Heart left ventricle (tissue), 16 donors: ENCODE measurements at regions of chr7 and their contacts with region 1.

Region 1: GRCh38 chr7:105664816-105665525 is 83.7 kb upstream of the EFCAB10 start:
- DNase-seq: no peak
- ATAC-seq: no peak
- H3K4me3 ChIP-seq: no peak overlapping the region
- H3K27ac ChIP-seq: no peak overlapping the region
- H3K4me1 ChIP-seq: no peaks in the 10 kb centered on the region
- H3K27me3 ChIP-seq: no peaks in the 10 kb centered on the region
- CTCF ChIP-seq: no peak
- POLR2A ChIP-seq: no peak

Region 2: DNA sequence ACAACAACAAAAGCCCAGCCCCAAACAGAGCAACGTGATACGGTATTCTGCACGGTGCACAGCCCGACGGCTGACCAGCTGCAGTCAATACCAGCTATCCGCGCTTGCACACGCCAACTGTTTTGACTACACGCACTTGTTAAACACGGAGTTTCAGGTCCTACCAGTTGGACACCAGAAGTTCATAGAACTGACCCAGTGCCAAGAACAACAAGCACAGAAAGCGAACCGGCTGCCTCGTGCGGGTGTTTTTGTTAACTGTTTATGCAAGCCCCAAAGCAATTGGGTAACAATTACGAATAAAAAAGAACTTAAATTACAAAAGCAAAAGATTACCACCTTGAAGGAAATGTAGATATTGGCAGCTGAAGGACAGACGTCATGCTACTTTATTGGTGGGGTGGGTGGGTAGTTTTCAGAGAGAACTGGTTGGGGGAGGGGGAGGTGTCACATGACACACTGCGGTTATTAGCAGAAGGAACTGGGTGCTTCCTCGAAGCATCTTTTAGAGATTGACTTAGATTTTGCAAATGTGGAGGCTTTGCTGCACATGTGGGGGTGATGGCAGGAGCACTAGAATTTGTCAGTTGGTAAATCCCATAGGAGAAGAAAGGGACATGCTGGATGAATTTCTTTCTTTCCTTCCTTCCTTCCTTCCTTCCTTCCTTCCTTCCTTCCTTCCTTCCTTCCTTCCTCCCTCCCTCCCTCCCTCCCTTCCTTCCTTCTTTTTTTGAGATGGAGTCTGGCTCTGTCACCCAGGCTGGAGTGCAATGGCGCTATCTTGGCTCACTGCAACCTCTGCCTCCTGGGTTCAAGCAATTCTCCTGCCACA is 27.0 kb after region 1 on chr7:
- intact Hi-C with region 1: loop called in 1 of 10 experiments (anchors 2 kb)
- DNase-seq: peak; percentile 44 to 74 (median 51)
- ATAC-seq: peak; percentile 73 to 84 (median 76)
- H3K4me3 ChIP-seq: peak overlapping the region; percentile 6 to 70 (median 54)
- H3K27ac ChIP-seq: peak overlapping the region; percentile 21 to 88 (median 70)
- H3K4me1 ChIP-seq: peaks cover 0 to 24% (median 1%) of the 10 kb centered on the region in 12 donors
- H3K27me3 ChIP-seq: no peaks in the 10 kb centered on the region
- CTCF ChIP-seq: no peak
- POLR2A ChIP-seq: no peak

Region 3: DNA sequence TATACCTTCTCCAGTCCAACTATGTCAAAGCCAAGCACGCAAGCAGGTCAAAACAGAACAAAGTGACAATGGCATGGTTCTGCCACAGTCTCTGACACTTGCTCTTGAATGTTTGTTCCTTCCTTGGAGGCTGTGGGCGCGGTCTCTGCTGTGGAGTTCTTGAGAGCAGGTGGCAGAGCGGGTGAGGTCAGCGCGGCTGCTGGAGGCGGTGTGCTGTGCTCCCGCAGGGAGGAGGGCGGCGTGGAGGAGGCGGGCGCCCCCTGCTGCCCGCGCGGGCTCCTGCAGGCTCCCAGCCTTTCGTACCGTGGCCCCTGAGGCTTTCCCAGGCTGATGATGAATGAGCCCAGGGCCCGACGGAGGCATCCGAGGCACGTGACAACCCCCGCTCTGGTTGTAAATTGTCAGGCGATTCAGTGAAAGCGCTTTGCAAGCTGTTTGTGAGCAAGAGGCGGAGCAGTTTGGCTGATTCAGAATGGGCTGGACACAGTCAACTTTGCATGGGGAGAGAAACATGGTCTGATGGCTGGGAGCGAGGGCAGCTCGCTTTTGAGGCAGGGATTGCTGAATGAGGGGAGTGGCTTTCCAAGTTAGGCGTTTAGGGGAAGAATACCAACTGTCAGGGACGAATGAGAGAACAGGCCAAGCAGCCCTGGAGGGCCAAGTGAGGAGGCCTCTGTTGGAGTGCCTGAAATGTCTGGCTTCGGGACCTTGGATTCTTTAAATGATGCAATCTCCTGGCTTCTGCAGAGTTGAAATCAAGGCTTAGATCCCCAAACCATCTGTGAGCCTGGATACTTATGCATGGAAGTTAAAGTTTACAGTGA is 344.6 kb after region 1 on chr7:
- intact Hi-C with region 1: loop called in 1 of 10 experiments (anchors 5 kb)
- DNase-seq: peak; percentile 60 to 90 (median 76)
- ATAC-seq: peak; percentile 83 to 99 (median 95)
- H3K4me3 ChIP-seq: peak overlapping the region in 4 of 12 donors; percentile 5 to 22 (median 22)
- H3K27ac ChIP-seq: peak overlapping the region in 3 of 12 donors; percentile 17 to 53 (median 17)
- H3K4me1 ChIP-seq: peaks cover 0 to 15% (median 2%) of the 10 kb centered on the region in 12 donors
- H3K27me3 ChIP-seq: no peaks in the 10 kb centered on the region
- CTCF ChIP-seq: peak; percentile 89 to 98 (median 95)
- POLR2A ChIP-seq: peak in 1 of 2 donors; percentile 22